ENCODE measurements at regions of chr14 and their contacts with region 1.

Region 1: DNA sequence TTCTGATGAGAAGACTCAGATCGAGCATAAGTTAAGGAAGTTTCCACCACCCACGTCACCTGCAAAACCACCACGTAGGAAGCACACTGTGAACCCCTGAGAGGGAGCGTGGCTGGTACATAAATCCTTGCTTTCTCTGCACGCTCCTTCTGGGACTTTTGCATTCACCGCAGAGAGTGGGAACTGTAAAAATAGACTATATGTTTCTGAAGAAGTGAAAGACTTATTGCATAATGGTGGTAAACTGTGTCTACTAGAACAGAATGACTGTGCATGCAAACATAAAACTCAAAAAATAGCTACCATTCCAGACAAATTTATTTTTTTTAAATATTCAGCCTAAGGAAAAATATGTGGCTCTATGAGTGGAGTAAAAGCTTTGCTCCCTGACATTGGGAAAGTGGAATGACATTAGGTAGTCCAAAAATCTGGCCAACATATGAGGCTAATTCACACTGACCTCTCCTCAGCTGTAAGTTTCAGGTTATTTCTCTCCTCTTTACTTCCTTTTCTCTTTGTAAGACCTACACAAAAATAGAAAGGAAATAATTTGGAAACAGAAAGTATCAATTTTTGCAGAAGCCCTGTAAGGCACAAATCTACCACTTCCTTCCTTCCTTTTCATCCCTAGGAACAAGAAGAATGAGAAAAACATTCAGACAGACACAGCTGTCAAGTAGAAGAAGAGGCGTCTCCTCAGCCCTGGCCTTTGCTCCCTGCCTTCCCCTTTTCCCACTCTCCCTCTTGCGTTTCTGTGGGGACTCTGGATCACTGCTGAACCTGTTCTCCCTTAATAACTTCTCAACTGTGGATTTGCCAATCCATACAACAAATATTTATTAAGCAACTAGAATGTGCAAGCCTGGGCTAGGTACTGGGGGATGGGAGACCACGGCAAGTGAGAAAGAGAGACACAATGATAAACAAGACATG is 264.3 kb upstream of the FOXN3 start:
- DNase-seq: peak; percentile 57
- ATAC-seq: peak; percentile 77
- H3K4me3 Mint-ChIP-seq: peak overlapping the region; percentile 48
- H3K27ac Mint-ChIP-seq: peak overlapping the region; percentile 84
- H3K4me1 Mint-ChIP-seq: peaks cover 28% of the 10 kb centered on the region
- H3K27me3 Mint-ChIP-seq: no peaks in the 10 kb centered on the region

Region 2: DNA sequence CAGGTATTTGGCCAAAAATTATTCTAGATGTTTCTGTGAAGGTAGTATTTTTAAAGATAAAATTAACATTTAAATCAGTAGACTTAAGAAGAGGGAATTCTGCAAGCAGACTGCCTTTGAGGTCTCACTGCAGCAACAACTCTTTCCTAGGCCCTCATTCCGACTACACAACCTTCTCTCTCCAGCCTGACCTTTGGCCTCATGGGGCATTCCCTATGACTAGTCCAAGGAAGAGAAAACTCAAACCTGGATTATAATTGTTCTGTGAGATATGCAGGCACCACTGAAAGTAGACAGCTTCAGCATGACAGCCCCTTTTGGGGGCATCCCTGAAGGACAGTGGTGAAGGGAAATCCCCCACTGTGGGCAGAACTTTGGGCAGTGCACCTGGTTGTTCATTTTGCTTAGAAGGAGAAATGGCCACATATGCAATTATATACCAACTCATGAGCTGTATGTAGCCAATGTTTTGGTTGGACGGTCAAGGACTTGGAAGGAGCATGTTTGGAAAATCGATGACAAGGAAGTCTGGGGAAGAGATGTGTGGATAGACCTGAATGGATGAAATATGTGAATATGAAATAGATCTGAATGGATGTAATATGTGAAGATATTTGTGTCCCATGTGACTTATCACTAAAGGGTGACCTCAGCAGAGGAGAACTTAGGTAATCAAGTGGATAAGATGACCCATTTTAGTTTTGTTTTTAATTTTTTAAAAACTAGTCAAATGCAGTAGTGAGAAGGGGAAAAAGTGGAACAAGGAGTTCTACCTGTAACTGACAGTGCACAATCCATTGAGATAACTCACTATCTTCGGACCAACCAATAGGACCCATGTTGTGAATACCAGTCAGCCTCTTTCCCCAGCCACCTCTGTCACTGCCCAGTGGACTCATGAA is 31.0 kb before region 1 on chr14:
- CTCF ChIA-PET with region 1: no interaction called
- DNase-seq: no peak
- ATAC-seq: peak; percentile 64
- H3K4me3 Mint-ChIP-seq: no peak overlapping the region
- H3K27ac Mint-ChIP-seq: no peak overlapping the region
- H3K4me1 Mint-ChIP-seq: peaks cover 14% of the 10 kb centered on the region
- H3K27me3 Mint-ChIP-seq: no peaks in the 10 kb centered on the region

Region 3: GRCh38 chr14:89669193-89669592 is 12.2 kb before region 1 on chr14:
- CTCF ChIA-PET with region 1: interaction called, 13 read pairs
- DNase-seq: peak; percentile 76
- ATAC-seq: peak; percentile 85
- H3K4me3 Mint-ChIP-seq: no peak overlapping the region
- H3K27ac Mint-ChIP-seq: peak overlapping the region; percentile 62
- H3K4me1 Mint-ChIP-seq: peaks cover 28% of the 10 kb centered on the region
- H3K27me3 Mint-ChIP-seq: no peaks in the 10 kb centered on the region

Region 4: GRCh38 chr14:89701211-89702043 is 20.1 kb after region 1 on chr14:
- CTCF ChIA-PET with region 1: interaction called, 10 read pairs
- DNase-seq: peak; percentile 88
- ATAC-seq: peak; percentile 91
- H3K4me3 Mint-ChIP-seq: peak overlapping the region; percentile 59
- H3K27ac Mint-ChIP-seq: peak overlapping the region; percentile 75
- H3K4me1 Mint-ChIP-seq: peaks cover 36% of the 10 kb centered on the region
- H3K27me3 Mint-ChIP-seq: no peaks in the 10 kb centered on the region